Right ventricle myocardium superior (tissue), 1 donor: ENCODE measurements at regions of chr9 and their contacts with region 1.

Region 1: DNA sequence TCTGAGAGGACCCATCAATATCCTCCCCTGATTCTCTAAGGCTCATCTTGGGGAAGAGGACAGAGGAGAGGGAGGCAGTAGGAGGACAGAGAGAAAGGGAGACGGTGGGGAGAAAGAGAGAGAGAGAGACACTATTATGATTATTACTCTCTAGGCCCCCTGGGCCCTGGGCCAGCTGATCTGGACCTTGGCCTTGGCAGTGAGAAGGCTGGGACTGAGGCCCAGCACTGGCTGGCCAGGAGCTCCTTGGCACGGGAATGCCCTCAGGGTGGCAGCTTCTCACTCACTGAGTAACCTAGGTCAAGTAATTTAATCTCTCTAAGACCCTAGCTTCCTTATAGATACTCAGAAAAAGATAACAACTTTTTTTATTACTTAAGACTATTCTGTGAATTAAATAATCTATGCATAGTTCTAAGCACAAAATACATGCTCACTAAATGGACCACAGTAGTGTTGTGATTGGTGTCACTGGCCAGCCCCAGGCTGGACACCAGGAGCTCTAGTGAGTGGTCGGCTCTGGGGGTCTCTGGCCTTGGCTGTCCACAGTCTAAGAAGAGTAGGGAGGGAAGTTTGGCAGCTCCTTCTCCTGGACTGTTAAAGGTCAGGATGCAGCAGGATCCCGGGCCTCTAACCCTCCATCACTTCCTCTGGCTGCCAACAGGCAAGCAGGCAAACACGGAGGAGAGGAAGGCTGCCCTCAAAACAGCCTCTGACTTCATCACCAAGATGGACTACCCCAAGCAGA is 50.0 kb downstream of the GSN start:
- DNase-seq: peak; percentile 86
- ATAC-seq: peak; percentile 65

Region 2: DNA sequence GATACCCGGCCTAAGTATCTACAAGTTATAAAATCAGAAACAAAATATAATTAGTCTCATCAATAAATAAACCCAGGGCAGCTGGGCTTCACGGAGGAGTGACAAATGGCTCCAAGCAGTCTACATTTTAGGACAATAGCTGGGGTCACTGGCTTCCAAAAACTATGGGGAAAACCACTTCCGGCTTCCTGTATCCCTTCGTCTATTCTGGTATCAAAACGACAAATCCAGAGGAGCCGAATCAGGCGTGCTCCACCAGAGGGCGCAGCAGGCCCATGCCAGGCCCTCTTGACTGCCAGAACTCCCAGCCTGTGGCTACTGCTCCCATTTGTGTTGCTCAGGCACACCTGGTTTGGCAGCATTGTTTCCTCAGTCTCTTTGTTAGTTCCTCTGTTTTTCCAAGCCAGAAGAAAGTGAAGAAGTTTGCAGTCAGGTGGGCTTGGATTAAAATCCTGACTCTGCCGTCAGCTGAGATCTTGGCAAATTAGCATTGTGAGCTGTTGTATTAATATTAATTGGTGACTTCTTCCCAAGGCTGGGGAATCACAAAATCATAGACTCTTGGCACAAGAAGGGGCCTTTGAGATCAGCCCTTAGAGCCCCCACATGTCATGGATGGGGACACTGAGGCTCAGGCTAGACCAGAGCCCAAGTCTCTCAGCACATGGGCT is 104.6 kb before region 1 on chr9:
- intact Hi-C with region 1: loop called (anchors 5 kb)
- DNase-seq: peak; percentile 93
- ATAC-seq: peak; percentile 99

Region 3: DNA sequence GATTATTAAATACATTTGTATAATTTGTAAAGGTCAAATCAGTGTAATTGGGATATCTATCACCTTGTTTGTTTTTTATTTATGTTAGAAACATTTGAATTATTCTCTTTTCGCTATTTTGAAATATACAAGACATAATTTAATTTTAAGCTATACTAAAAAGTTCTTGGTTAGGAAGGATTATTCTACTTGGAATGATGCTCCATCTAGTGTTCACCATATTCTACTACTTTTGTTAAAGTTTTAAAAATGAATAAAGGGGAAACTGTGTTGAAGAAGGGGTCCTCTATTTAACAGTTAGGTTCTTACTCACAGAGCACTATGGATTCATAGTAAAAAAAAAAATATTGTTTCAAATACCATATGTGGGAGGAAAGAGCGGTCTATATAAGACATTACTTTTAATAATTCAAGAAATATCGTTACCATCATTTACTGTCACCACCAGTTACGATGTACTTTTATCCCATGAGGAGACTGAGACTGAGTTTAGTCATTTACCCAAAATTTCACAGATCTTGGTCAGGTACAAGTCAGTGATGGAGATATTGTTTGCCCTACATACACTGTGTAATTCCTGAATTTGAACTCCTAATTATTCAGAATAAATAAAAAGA is 58.4 kb after region 1 on chr9:
- intact Hi-C with region 1: loop called (anchors 5 kb)
- DNase-seq: no peak
- ATAC-seq: no peak

Region 4: DNA sequence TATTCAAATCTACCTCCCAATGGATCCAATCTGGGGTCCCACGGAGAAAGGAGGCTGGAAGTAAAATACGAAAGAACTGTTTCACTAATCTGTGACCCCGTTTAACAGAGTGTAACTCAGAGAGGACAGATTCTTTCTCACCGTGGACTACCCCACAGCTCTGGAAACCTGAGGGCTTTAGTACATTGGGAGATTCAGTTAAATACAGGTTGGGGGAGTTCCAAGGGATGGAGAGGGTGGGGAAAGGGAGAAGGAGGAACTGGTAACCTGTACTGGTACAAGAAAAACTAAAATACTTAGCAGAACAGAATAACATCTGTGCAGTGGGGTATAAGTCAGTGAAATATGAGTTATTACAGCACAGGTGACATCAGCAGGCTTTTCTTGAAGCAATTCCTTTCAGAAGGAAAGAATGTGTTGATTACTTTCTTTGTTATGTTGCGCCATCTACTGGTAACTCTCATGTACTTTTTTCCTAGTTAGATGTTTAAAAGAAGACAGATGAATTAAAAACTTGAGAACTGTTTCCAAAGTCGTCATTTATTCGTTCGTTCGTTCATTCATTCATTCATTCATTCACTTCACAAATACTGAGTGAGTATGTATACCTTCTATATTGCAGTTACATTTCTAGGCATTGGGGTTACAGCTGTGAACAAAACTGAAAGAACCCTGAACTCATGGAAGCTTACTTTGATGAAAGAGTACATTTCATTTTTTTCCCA is 82.1 kb after region 1 on chr9:
- intact Hi-C with region 1: loop called (anchors 5 kb)
- DNase-seq: no peak
- ATAC-seq: peak; percentile 61

Region 5: DNA sequence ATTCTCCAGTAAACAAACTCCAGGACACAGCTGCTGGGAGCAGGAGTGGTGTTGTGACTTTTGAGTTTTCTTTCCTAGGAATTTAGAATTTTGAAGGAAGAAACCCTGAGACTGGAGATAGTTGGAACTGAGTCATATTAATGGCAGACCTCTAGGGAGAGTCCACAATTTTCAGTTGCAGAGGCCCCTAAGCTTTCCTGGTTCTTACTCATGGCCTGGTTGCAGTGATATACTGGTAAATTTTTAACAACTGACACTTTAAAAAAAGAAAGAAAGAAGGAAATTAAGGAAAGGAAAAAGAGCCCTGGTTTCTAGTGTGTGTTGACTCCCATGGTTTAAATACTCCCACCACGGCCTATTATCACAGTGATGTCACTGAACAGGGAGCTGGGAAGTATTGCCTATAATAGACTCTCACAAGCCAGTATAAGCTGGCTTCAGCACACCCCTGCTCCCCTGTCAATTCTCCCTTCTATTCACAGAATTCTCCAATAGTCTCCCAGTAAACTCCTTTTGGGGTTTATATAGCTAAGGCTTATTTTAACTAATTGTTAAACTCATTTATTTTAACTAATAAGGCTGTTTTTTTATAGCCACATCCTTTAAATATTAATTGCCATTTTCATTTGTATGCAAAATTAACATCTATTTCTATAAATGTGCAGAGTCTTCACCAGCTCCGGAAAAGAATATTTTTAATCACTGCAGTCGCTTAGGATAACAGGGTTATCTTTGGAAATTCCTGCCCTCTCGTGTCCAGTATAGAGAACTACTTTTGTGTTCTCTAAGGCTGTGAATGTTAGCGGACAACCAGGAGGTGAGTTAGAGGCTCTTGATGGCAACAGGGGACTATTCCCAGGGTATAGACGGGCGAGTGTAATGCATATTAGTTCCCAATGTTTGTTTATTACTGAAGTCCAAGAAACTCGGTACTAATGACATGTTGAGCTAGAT is 122.1 kb after region 1 on chr9:
- intact Hi-C with region 1: no loop called
- DNase-seq: no peak
- ATAC-seq: peak; percentile 86